ENCODE measurements at regions of chr12 and their contacts with region 1.

Region 1: DNA sequence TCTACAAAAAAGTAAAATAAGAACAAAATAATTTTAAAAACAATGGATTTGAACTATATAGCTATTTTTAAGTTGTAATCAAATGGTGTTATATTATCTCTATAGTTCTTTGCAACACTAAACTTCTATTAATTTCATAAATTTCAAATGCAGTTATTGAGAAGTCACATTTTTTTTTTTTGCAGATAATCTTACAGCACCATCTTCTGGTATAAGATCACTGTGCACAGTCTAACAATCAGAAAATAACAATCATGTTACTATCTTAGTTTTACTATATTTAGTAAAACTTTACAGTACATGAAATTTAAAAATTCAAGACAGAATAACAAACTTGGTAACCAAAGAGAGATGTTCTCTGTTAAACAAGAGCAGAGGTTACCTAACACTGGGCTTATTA is 40.6 kb downstream of the GXYLT1 start:
- DNase-seq: no peak
- H3K4me3 ChIP-seq: no peak overlapping the region
- H3K27ac ChIP-seq: no peak overlapping the region
- H3K4me1 ChIP-seq: peaks cover 13% of the 10 kb centered on the region
- CTCF ChIP-seq: peak; percentile 82

Region 2: GRCh38 chr12:42031847-42032564 is 72.1 kb before region 1 on chr12:
- CTCF ChIA-PET with region 1: no interaction called
- POLR2A ChIA-PET with region 1: interaction called, 13 read pairs
- intact Hi-C with region 1: no loop called
- DNase-seq: no peak
- H3K4me3 ChIP-seq: no peak overlapping the region
- H3K27ac ChIP-seq: no peak overlapping the region
- H3K4me1 ChIP-seq: no peaks in the 10 kb centered on the region
- CTCF ChIP-seq: no peak